ENCODE measurements at regions of chrX and their contacts with region 1.

Region 1: GRCh38 chrX:55160685-55161552 is 59.2 kb upstream of the PAGE5 start:
- DNase-seq: peak; percentile 81 to 94 (median 91)
- ATAC-seq: peak; percentile 91
- H3K4me3 ChIP-seq: peak overlapping the region; percentile 74 to 89
- H3K4me3 Mint-ChIP-seq: peak overlapping the region; percentile 92
- H3K27ac ChIP-seq: peak overlapping the region; percentile 97
- H3K27ac Mint-ChIP-seq: peak overlapping the region; percentile 98
- H3K4me1 ChIP-seq: peaks cover 9% of the 10 kb centered on the region
- H3K4me1 Mint-ChIP-seq: peaks cover 16% of the 10 kb centered on the region
- H3K27me3 ChIP-seq: no peaks in the 10 kb centered on the region
- H3K27me3 Mint-ChIP-seq: no peaks in the 10 kb centered on the region
- CTCF ChIP-seq: peak; percentile 64

Region 2: DNA sequence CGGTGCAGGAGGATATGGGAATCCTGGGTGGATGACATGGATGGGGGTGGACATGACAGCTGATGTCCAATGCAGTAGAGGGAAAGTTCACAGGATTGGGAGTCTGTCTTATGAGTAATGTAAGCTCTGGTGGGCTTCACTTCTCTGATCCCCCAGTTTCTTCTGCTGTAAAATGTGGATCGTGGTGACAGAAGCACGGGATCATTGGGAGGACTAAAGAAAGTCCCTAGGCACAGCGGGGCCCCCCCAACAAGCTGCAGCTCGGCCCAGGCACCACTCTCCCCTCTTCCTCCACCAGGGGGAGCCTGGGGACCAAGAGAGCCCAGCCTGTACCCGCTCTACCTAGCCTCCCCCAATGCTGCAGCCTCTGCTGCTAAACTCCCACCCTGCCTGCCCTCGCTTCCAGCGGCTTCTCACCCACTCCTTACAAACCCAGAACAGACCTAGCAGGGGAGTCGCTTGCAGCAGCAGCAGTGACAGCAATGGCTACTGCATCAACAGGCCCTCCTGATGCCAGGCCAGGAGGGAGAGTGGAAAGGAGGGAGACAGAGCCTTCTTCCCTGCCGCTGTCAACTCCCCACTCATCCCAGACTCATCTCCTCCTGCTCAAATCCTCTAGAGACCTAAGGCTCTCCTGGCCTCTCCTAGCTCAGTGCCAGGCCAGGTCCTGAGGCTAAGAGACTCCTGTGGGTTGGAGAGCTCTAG is 1843.4 kb before region 1 on chrX:
- CTCF ChIA-PET with region 1: no interaction called
- POLR2A ChIA-PET with region 1: no interaction called
- intact Hi-C with region 1: loop called in 1 of 2 experiments (anchors 10 kb)
- DNase-seq: peak; percentile 53 to 84 (median 71)
- ATAC-seq: peak; percentile 89
- H3K4me3 ChIP-seq: no peak overlapping the region
- H3K4me3 Mint-ChIP-seq: no peak overlapping the region
- H3K27ac ChIP-seq: no peak overlapping the region
- H3K27ac Mint-ChIP-seq: no peak overlapping the region
- H3K4me1 ChIP-seq: peaks cover 9% of the 10 kb centered on the region
- H3K4me1 Mint-ChIP-seq: peaks cover 17% of the 10 kb centered on the region
- H3K27me3 ChIP-seq: peaks cover 0 to 7% of the 10 kb centered on the region in 2 experiments
- H3K27me3 Mint-ChIP-seq: peaks cover 22% of the 10 kb centered on the region
- CTCF ChIP-seq: peak; percentile 71

Region 3: DNA sequence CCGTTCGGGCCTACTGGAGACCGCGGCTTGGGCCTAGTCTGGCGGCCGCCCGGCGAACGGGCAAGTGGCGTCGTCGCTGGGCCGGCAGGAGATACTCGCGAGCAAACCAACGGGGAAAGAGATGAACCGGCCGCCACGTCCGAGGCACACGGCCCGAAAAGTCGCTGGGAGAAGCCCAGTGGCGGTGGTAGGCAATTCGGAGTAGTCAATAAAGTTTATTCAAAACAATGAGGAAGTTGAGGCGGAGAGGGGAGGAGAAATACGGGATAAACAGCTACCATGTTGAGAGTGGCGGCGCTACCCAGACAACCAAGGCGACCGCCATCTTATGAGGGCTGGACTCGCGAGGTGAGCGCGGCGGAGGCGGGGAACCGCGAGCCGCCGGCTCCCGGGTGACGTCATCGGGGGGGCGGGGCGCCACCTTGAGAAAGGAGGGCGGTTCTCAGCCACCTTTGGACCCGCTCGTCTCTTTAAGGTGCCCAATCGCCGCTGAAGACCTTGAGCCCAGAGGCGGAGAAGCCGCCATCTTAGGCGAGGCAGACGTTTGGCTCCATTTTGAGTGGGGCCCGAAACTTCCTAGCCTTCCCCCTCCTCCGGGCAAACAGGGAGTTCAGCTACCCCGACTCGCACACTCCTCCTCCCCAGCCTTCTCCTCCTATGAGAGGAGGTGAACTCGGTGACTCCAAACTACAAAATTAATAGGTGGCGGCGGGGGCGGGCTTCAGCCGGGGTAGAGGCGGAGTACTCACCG is 1116.6 kb before region 1 on chrX and contains the start of gene PHF8:
- CTCF ChIA-PET with region 1: no interaction called
- POLR2A ChIA-PET with region 1: interaction called, 3 read pairs
- intact Hi-C with region 1: loop called in 1 of 2 experiments (anchors 2 kb)
- DNase-seq: peak; percentile 87 to 96 (median 95)
- ATAC-seq: peak; percentile 82
- H3K4me3 ChIP-seq: peak within 1 kb of the TSS; percentile 75 to 86
- H3K4me3 Mint-ChIP-seq: peak within 1 kb of the TSS; percentile 94
- H3K27ac ChIP-seq: peak within 1 kb of the TSS; percentile 85 to 95
- H3K27ac Mint-ChIP-seq: peak within 1 kb of the TSS; percentile 97
- H3K4me1 ChIP-seq: peaks cover 11% of the 10 kb centered on the region
- H3K4me1 Mint-ChIP-seq: peaks cover 29% of the 10 kb centered on the region
- H3K27me3 ChIP-seq: no peaks in the 10 kb centered on the region
- H3K27me3 Mint-ChIP-seq: no peaks in the 10 kb centered on the region
- CTCF ChIP-seq: no peak
- total RNA-seq, gene PHF8: 41.8 to 43.7 TPM

Region 4: GRCh38 chrX:54529552-54530357 is 631.2 kb before region 1 on chrX and contains the start of gene GNL3L:
- CTCF ChIA-PET with region 1: no interaction called
- POLR2A ChIA-PET with region 1: no interaction called
- intact Hi-C with region 1: loop called (anchors 2 to 10 kb)
- DNase-seq: peak; percentile 55 to 89 (median 78)
- ATAC-seq: peak; percentile 83
- H3K4me3 ChIP-seq: peak within 1 kb of the TSS; percentile 85 to 95
- H3K4me3 Mint-ChIP-seq: peak within 1 kb of the TSS; percentile 97
- H3K27ac ChIP-seq: peak within 1 kb of the TSS; percentile 79 to 94
- H3K27ac Mint-ChIP-seq: peak within 1 kb of the TSS; percentile 97
- H3K4me1 ChIP-seq: peaks cover 22% of the 10 kb centered on the region
- H3K4me1 Mint-ChIP-seq: peaks cover 40% of the 10 kb centered on the region
- H3K27me3 ChIP-seq: no peaks in the 10 kb centered on the region
- H3K27me3 Mint-ChIP-seq: no peaks in the 10 kb centered on the region
- CTCF ChIP-seq: no peak
- total RNA-seq, gene GNL3L: 20.9 to 24.0 TPM

Region 5: GRCh38 chrX:54891573-54891972 is 269.3 kb before region 1 on chrX:
- CTCF ChIA-PET with region 1: interaction called, 9 read pairs
- POLR2A ChIA-PET with region 1: no interaction called
- intact Hi-C with region 1: loop called (anchors 1 to 5 kb)
- DNase-seq: peak in 8 of 9 experiments; percentile 1 to 67 (median 25)
- ATAC-seq: peak; percentile 38
- H3K4me3 ChIP-seq: no peak overlapping the region
- H3K4me3 Mint-ChIP-seq: no peak overlapping the region
- H3K27ac ChIP-seq: no peak overlapping the region
- H3K27ac Mint-ChIP-seq: no peak overlapping the region
- H3K4me1 ChIP-seq: no peaks in the 10 kb centered on the region
- H3K4me1 Mint-ChIP-seq: no peaks in the 10 kb centered on the region
- H3K27me3 ChIP-seq: no peaks in the 10 kb centered on the region
- H3K27me3 Mint-ChIP-seq: peaks cover 12% of the 10 kb centered on the region
- CTCF ChIP-seq: peak; percentile 18

Region 6: GRCh38 chrX:55135171-55135570 is 25.7 kb before region 1 on chrX:
- CTCF ChIA-PET with region 1: no interaction called
- POLR2A ChIA-PET with region 1: no interaction called
- intact Hi-C with region 1: loop called in 1 of 2 experiments (anchors 1 kb)
- DNase-seq: peak in 7 of 9 experiments; percentile 0 to 46 (median 21)
- ATAC-seq: no peak
- H3K4me3 ChIP-seq: no peak overlapping the region
- H3K4me3 Mint-ChIP-seq: no peak overlapping the region
- H3K27ac ChIP-seq: no peak overlapping the region
- H3K27ac Mint-ChIP-seq: no peak overlapping the region
- H3K4me1 ChIP-seq: no peaks in the 10 kb centered on the region
- H3K4me1 Mint-ChIP-seq: no peaks in the 10 kb centered on the region
- H3K27me3 ChIP-seq: no peaks in the 10 kb centered on the region
- H3K27me3 Mint-ChIP-seq: no peaks in the 10 kb centered on the region
- CTCF ChIP-seq: peak; percentile 24

Region 7: DNA sequence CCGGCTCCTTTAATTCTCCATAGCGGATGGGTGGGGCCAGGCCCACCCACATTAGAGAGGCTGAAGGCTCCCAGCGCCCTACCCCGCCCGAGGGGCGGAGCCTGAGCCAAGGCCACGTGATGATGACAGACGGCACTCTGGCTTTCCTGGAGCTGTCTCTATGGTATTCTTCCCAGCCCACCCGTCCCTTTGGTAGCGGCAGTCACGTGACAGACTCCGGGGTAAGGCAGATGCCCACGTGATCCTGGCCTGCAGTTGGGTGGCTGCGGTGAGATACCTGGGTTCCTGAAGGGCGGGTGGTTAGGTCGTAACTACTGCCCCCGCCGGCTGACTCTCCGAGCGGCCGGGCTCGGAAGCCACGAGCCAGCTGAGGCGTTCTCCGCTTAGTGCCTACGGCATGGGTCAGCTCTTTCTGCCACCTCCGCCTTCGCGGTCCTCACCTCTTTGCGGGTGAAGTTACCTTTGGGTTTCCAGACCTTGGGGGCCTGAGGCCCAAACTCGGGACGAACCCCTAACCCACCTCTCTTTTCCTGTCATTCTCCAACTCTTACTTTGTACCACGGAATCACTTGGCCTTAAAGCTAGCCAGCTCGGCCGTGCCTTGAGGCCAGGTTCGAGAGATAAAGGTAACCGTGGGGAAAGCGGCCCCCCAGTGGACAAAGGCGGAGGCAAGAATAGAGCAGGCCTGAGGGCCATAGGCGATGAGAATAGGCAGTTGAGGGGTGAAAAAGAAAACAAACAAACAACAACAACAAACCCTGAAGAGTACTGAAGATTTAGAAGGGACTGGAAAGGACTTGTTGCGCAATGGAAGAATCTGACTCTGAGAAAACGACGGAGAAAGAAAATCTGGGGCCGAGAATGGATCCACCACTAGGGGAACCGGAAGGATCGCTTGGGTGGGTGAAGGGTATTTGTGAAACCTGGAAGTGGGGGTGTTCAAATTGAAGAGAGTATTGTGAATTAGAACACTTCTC is 556.9 kb after region 1 on chrX and contains the start of gene RRAGB:
- CTCF ChIA-PET with region 1: interaction called, 3 read pairs
- POLR2A ChIA-PET with region 1: interaction called, 3 read pairs
- intact Hi-C with region 1: loop called (anchors 1 to 10 kb)
- DNase-seq: peak; percentile 78 to 96 (median 89)
- ATAC-seq: peak; percentile 98
- H3K4me3 ChIP-seq: peak within 1 kb of the TSS; percentile 76 to 88
- H3K4me3 Mint-ChIP-seq: peak within 1 kb of the TSS; percentile 75
- H3K27ac ChIP-seq: peak within 1 kb of the TSS; percentile 87 to 93
- H3K27ac Mint-ChIP-seq: peak within 1 kb of the TSS; percentile 92
- H3K4me1 ChIP-seq: peaks cover 14% of the 10 kb centered on the region
- H3K4me1 Mint-ChIP-seq: peaks cover 37% of the 10 kb centered on the region
- H3K27me3 ChIP-seq: no peaks in the 10 kb centered on the region
- H3K27me3 Mint-ChIP-seq: no peaks in the 10 kb centered on the region
- CTCF ChIP-seq: peak; percentile 58
- total RNA-seq, gene RRAGB: 4.9 to 6.6 TPM

Measured in CD8-positive, alpha-beta T cell (primary cell).